AG04449 (cell line): ENCODE measurements at regions of chr12 and their contacts with region 1.

Region 1: DNA sequence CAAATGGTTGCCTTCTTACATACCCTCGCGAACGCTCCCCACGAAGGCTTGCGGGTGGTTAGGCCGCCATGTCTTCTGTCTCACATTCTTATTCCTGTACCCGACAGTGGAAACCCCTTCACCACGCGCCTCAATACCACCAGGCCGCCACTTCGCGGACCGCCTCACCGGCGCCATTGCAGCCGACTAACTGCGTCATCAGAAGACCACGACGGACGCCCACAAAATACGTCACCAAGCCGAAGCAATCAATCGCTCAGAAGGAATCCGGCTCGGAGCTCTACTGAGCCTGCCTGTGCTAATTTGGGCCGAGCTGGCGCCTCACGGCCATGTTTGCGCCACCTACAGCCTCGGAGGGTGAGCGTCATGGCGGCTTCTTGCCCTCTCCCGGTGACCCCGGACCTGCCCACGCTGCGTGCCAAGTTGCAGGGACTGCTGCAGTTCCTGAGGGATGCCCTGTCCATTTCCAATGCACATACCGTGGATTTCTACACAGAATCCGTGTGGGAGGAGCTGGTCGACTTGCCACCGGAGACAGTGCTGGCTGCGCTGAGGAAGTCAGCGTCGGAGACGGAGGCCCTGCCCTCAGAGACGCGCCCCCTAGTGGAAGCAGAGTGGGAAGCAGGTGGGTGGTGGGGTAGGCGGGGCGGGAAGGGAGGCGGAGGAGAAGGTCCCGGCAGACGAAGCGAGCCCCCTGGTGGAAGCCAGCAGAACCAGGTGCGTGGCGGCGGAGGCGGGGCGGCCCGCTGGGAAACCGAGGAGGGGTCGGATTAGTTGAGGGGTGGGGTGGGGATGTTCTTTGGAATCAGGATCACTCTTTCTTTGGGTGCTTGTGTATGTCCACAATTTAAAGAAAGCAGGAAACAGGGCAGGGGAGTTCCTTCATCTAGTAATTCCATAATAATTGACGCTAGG is at the starts of genes CCDC59 and METTL25:
- DNase-seq: peak; percentile 91
- H3K4me3 ChIP-seq: peak within 1 kb of the TSS; percentile 93
- CTCF ChIP-seq: peak; percentile 95

Region 2: DNA sequence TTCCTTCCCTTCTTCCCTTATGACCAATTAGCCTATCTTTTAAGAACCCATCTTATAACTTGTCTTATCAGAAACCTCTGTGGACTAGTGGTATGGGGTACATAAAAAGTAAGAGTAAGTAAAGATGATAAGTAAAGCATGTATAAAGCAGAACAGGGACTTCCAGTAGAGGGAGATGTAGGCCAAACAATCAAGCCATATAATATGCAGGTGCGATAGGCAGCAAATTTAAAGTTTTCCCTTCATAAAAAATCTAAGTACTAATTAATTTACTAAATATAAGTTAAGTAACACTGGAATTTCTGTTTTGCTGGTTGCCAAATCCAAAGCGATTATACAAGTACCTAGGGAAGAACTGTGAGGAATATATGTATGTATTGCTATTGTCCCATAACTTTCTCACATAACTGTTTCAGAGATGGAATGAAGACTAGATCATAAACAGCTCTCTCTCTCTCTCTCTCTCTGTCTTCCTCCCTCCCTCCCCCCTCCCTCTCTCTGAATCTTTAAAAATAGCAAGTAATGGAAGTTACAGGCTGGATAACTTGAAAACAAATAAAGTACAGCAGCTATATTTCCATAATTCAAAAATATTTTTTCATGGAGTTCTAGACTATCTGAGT is 25.6 kb after region 1 on chr12:
- CTCF ChIA-PET with region 1: interaction called, 14 read pairs
- POLR2A ChIA-PET with region 1: no interaction called
- DNase-seq: no peak
- H3K4me3 ChIP-seq: no peak overlapping the region
- CTCF ChIP-seq: no peak